ENCODE measurements at regions of chr18 and their contacts with region 1.

Region 1: GRCh38 chr18:4096486-4096885 is 358.6 kb downstream of the DLGAP1 start:
- DNase-seq: no peak
- ATAC-seq: no peak
- H3K4me3 ChIP-seq: no peak overlapping the region
- H3K27ac ChIP-seq: no peak overlapping the region
- H3K4me1 ChIP-seq: no peaks in the 10 kb centered on the region
- H3K27me3 ChIP-seq: peaks cover 0 to 13% (median 0%) of the 10 kb centered on the region in 7 donors
- CTCF ChIP-seq: no peak

Region 2: GRCh38 chr18:4017480-4017879 is 79.0 kb before region 1 on chr18:
- intact Hi-C with region 1: no loop called
- DNase-seq: no peak
- ATAC-seq: no peak
- H3K4me3 ChIP-seq: no peak overlapping the region
- H3K27ac ChIP-seq: no peak overlapping the region
- H3K4me1 ChIP-seq: no peaks in the 10 kb centered on the region
- H3K27me3 ChIP-seq: no peaks in the 10 kb centered on the region
- CTCF ChIP-seq: peak in 1 of 9 donors; percentile 9

Region 3: GRCh38 chr18:5057386-5058348 is 961.2 kb after region 1 on chr18:
- intact Hi-C with region 1: loop called in 3 of 10 experiments (anchors 10 kb)
- DNase-seq: peak; percentile 20 to 29
- ATAC-seq: peak in 6 of 8 donors; percentile 44 to 82 (median 68)
- H3K4me3 ChIP-seq: peak overlapping the region in 1 of 10 donors; percentile 8
- H3K27ac ChIP-seq: peak overlapping the region in 1 of 10 donors; percentile 52
- H3K4me1 ChIP-seq: peaks cover 0 to 21% (median 0%) of the 10 kb centered on the region in 9 donors
- H3K27me3 ChIP-seq: no peaks in the 10 kb centered on the region
- CTCF ChIP-seq: peak; percentile 47 to 78 (median 74)